GM10248 (cell line): ENCODE measurements at regions of chr3 and their contacts with region 1.

Region 1: DNA sequence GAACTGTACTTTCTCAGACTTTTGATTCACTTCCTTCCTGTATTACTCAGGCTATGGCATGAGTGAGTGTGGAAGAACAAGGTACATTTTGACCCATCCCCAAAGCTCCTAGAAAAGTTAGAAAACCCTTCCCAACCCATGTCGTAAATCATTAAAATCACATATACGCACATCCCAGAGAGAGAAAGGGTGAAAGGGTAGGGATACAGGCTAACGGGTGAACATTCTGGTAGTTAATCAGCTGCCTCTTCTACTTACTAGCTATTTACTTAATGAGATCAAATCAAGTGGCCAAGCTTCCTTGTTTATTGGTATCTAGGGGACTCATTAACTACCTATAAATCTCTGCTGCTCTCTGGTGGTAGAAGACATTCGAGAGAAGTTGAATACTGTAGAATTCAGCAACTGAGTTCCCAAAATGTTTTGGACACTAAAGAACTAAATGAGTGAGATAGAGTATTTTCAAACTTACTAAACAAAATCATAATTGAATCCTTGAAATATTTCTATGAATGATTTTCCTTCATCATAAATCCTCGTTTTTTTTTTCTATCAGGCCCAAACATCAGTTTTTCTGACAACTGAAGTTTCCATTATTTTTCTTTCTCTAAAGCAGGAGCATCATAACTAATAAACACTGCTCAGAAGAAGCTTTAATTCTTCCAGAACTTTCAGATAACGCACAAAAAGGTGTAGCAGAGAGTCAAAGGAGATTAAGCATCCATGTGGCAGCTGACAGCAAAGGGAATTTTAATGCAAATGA is 124.2 kb downstream of the IMPG2 start:
- DNase-seq: no peak
- CTCF ChIP-seq: peak; percentile 20

Region 2: DNA sequence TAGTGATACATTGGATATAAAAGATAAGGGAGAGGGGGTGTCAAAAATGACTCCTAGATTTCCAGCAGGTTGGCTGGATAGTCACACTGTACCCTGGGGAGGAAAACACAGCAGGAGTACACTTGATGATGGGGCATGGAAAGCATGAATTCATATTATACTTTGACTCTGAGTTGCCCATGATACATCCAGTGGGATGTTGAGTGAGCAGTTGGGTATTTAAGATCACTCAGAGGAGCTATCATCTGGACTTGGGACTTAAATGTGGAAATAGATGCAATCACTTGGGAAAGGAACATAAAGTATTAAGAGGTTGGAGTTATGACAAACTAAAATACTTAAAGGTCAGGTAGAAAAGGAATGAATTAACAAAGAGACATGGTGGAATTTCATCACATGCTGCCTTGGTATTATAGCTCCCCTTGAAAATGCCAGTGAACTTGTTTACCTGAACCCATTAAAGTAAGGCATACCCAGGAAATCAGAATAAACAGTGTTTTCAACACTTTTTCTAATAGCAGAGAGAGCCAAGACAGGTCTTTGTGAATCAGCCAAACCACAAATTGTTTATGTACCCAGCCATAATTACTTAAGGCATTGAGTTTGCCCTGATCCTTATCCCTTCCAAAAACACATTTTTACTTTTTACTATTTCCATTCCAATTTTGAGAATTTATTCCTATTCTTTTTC is 153.0 kb before region 1 on chr3:
- CTCF ChIA-PET with region 1: no interaction called
- POLR2A ChIA-PET with region 1: no interaction called
- DNase-seq: no peak
- CTCF ChIP-seq: no peak

Region 3: DNA sequence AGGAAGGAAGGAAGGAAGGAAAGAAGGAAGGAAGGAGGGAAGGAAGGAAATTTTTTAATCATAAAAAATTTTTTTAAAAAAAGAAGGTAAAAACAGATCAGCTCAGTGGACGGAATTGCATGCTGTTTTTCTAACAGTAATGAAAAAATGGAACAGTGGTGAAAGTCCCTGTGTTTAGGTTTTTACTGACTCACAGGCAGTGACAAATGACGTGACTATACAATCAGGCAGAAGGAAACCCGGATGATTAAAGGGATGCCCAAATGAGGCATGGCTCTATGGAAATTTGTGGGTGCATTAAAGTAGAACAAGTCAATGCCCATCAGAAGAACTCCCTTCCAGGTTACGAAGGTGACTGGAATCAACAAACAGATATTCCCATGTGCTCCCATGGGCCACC is 10.8 kb before region 1 on chr3:
- CTCF ChIA-PET with region 1: interaction called, 11 read pairs
- POLR2A ChIA-PET with region 1: no interaction called
- DNase-seq: no peak
- CTCF ChIP-seq: no peak